HCT116 (cell line): ENCODE measurements at regions of chrX and their contacts with region 1.

Region 1: GRCh38 chrX:21740329-21741274 is 17.3 kb downstream of the SMPX start:
- DNase-seq: no peak
- ATAC-seq: no peak
- H3K4me3 ChIP-seq: no peak overlapping the region
- H3K27ac ChIP-seq: no peak overlapping the region
- H3K4me1 ChIP-seq: no peaks in the 10 kb centered on the region
- H3K27me3 ChIP-seq: no peaks in the 10 kb centered on the region
- CTCF ChIP-seq: no peak
- POLR2A ChIP-seq: no peak
- RAD21 ChIP-seq: no peak

Region 2: GRCh38 chrX:21126661-21127060 is 613.9 kb before region 1 on chrX:
- CTCF ChIA-PET with region 1: no interaction called
- POLR2A ChIA-PET with region 1: no interaction called
- RAD21 ChIA-PET with region 1: no interaction called
- intact Hi-C with region 1: no loop called
- DNase-seq: no peak
- ATAC-seq: no peak
- H3K4me3 ChIP-seq: no peak overlapping the region
- H3K27ac ChIP-seq: no peak overlapping the region
- H3K4me1 ChIP-seq: no peaks in the 10 kb centered on the region
- H3K27me3 ChIP-seq: no peaks in the 10 kb centered on the region
- CTCF ChIP-seq: no peak
- POLR2A ChIP-seq: no peak
- RAD21 ChIP-seq: no peak

Region 3: DNA sequence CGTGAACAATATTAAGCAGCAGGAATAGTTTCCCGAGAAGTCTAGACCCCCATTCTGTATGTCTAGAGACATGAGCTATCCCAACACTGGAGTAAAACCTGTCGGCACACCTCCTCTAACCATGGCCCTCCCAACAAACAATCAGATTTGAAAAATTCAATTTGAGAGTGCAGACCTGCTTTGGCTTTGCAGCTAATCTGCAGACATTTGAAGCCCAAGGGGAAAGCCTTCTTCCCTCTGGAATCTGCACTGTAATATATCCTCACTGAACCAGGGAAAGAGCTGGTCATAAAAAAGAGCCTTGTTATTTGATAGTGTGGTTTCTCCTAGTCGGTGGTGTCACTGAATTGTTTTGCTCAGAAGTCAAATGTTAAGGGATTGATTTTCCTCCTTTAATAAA is 37.9 kb before region 1 on chrX:
- CTCF ChIA-PET with region 1: no interaction called
- POLR2A ChIA-PET with region 1: no interaction called
- RAD21 ChIA-PET with region 1: no interaction called
- intact Hi-C with region 1: loop called (anchors 1 kb)
- DNase-seq: no peak
- ATAC-seq: no peak
- H3K4me3 ChIP-seq: no peak overlapping the region
- H3K27ac ChIP-seq: no peak overlapping the region
- H3K4me1 ChIP-seq: no peaks in the 10 kb centered on the region
- H3K27me3 ChIP-seq: no peaks in the 10 kb centered on the region
- CTCF ChIP-seq: no peak
- POLR2A ChIP-seq: no peak
- RAD21 ChIP-seq: no peak